ENCODE measurements at regions of chr9 and their contacts with region 1.

Region 1: GRCh38 chr9:122810306-122810946 is 10.5 kb downstream of the OR1K1 start:
- DNase-seq: peak; percentile 59 to 89 (median 72)
- ATAC-seq: peak; percentile 92
- H3K4me3 ChIP-seq: no peak overlapping the region
- H3K4me3 Mint-ChIP-seq: no peak overlapping the region
- H3K27ac ChIP-seq: no peak overlapping the region
- H3K27ac Mint-ChIP-seq: no peak overlapping the region
- H3K4me1 ChIP-seq: peaks cover 17% of the 10 kb centered on the region
- H3K4me1 Mint-ChIP-seq: peaks cover 30% of the 10 kb centered on the region
- H3K27me3 ChIP-seq: no peaks in the 10 kb centered on the region
- H3K27me3 Mint-ChIP-seq: no peaks in the 10 kb centered on the region
- CTCF ChIP-seq: peak; percentile 85

Region 2: DNA sequence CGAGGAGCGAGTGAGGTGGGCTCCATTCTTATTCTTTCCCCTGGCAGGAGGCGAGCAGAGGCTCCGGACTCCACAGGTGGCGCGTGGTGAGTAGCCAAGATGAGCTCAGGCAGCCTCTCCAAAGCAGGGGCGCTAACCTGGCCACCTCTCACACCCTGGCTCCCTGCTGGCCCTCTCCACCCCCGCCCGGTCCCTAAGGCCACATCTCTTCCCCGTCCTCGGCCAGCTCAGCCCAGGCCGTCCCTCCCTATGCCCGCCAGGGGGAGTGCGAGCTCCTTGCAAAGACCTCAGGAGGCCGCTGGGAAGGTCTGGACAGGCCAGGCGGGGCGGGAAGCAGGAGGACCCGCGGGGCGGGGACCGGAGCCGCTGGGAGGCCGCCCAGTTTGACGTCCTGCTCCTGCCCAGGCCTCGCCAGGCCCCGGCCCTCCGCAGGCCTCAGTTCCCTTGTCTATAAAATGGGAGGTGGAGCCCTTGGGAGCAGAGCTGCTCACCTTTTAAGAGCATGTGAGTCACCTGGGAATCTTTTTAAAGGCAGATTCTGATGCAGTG is 1264.5 kb before region 1 on chr9:
- CTCF ChIA-PET with region 1: no interaction called
- POLR2A ChIA-PET with region 1: no interaction called
- intact Hi-C with region 1: loop called in 1 of 2 experiments (anchors 5 kb)
- DNase-seq: peak; percentile 27 to 78 (median 46)
- ATAC-seq: peak; percentile 49
- H3K4me3 ChIP-seq: no peak overlapping the region
- H3K4me3 Mint-ChIP-seq: no peak overlapping the region
- H3K27ac ChIP-seq: no peak overlapping the region
- H3K27ac Mint-ChIP-seq: no peak overlapping the region
- H3K4me1 ChIP-seq: peaks cover 16% of the 10 kb centered on the region
- H3K4me1 Mint-ChIP-seq: peaks cover 2% of the 10 kb centered on the region
- H3K27me3 ChIP-seq: peaks cover 11 to 28% of the 10 kb centered on the region in 2 experiments
- H3K27me3 Mint-ChIP-seq: peaks cover 41% of the 10 kb centered on the region
- CTCF ChIP-seq: peak; percentile 72

Region 3: DNA sequence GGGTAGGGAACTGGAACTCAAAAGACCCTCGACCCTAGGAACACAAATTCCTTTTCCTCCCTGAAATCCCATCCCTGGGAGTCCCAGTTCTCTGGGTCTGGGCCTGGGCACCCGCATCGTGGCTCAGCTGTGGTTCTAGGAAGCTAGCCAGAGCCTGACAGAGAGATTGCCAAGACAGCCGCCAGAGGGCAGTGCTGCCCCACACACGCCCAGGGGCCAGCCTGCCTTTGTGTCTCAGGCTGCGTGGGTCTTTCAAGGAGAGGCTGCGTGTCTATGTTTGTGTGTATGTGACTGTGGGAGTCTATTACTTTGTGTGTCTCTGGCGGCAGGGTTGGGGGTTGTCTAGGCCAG is 685.3 kb before region 1 on chr9:
- CTCF ChIA-PET with region 1: interaction called, 6 read pairs
- POLR2A ChIA-PET with region 1: no interaction called
- intact Hi-C with region 1: loop called (anchors 1 kb)
- DNase-seq: peak; percentile 55 to 86 (median 74)
- ATAC-seq: peak; percentile 79
- H3K4me3 ChIP-seq: no peak overlapping the region
- H3K4me3 Mint-ChIP-seq: peak overlapping the region; percentile 65
- H3K27ac ChIP-seq: no peak overlapping the region
- H3K27ac Mint-ChIP-seq: no peak overlapping the region
- H3K4me1 ChIP-seq: peaks cover 36% of the 10 kb centered on the region
- H3K4me1 Mint-ChIP-seq: peaks cover 21% of the 10 kb centered on the region
- H3K27me3 ChIP-seq: peaks cover 18 to 27% of the 10 kb centered on the region in 2 experiments
- H3K27me3 Mint-ChIP-seq: peaks cover 52% of the 10 kb centered on the region
- CTCF ChIP-seq: peak; percentile 91

Region 4: DNA sequence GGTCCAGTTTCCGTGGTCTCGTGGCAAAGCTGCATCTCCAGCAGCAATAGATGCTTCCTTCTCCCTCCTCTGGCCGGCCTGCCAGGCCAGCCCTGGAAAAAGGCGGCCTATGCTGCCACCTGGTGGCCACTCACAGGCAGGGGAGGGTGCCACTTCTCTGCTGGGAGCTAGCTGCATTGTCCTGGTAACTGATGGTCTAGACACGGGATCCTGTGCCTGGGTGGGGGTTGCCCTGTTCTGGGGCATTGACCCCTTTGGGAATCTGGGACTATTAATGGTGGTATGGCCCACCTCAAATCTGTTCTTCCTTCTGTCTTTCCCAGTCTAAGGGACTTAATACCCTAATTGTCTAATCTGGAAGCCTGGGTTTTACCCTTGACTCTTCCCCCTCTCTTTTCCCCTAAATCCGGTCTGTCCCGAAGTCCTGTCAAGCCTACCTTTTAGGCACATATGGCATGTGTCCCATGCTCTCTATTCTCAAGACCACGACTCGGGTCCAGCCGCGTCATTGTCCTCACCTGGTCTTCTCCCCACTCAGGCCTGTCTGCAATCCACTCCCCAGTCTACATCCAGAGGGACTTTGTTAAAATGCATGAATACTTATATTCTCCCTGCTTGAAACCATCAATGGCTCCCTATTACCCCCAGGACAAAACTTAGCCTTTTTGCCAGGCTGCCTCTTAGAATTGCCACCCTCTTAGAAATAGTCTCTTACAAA is 459.6 kb before region 1 on chr9:
- CTCF ChIA-PET with region 1: no interaction called
- POLR2A ChIA-PET with region 1: no interaction called
- intact Hi-C with region 1: loop called (anchors 1 to 2 kb)
- DNase-seq: peak; percentile 48 to 82 (median 70)
- ATAC-seq: peak; percentile 79
- H3K4me3 ChIP-seq: no peak overlapping the region
- H3K4me3 Mint-ChIP-seq: no peak overlapping the region
- H3K27ac ChIP-seq: no peak overlapping the region
- H3K27ac Mint-ChIP-seq: no peak overlapping the region
- H3K4me1 ChIP-seq: peaks cover 6% of the 10 kb centered on the region
- H3K4me1 Mint-ChIP-seq: peaks cover 12% of the 10 kb centered on the region
- H3K27me3 ChIP-seq: peaks cover 15% of the 10 kb centered on the region in 2 experiments
- H3K27me3 Mint-ChIP-seq: peaks cover 54% of the 10 kb centered on the region
- CTCF ChIP-seq: peak; percentile 92

Region 5: DNA sequence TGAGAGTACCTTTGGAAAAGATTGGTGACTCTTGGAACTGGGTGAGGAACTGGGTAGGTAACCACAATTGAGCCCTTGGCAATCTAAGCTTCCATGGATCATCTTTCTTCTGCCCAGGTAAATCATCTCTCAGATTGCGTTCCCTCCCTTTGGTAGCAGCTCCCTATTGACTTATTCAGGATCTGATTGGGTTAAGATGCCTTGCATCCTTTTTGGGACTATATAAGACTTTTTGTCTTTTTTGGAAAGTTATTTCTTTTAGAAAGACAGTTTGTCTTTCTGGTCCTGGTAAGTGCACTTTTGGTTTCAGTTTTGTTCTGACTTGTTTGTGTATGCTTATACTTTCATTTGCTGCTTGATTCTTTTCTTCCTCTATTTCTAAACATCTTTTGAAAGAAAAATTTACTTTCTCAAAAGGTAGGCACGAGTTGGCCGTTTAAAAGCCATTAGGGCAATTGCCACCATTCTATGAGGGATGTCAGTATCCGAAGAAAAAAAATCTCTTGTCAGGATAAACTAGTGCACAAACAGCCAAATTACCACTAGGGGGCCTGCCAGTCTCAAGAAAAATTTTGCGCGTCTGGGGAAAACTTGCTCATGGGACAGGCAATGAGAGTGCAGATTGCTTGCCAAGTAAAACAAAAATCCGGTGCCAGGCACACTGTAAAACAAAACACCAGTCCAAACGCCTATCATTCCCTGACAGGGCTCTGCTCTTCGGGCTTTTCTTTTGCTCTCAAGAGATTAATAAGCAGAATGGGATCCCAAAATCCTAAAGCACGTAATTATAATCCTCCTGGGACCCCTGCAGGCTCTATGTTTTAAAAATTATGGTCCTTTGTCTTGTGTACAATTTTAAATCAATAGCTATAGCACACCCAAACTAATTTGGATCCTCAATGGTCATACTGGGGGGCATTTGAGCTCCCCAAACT is 345.5 kb before region 1 on chr9:
- CTCF ChIA-PET with region 1: interaction called, 3 read pairs
- POLR2A ChIA-PET with region 1: interaction called, 3 read pairs
- intact Hi-C with region 1: loop called (anchors 1 kb)
- DNase-seq: peak; percentile 41 to 79 (median 52)
- ATAC-seq: peak; percentile 77
- H3K4me3 ChIP-seq: peak overlapping the region; percentile 56
- H3K4me3 Mint-ChIP-seq: peak overlapping the region; percentile 92
- H3K27ac ChIP-seq: peak overlapping the region in 1 of 2 donors; percentile 42
- H3K27ac Mint-ChIP-seq: peak overlapping the region; percentile 78
- H3K4me1 ChIP-seq: peaks cover 7% of the 10 kb centered on the region
- H3K4me1 Mint-ChIP-seq: peaks cover 17% of the 10 kb centered on the region
- H3K27me3 ChIP-seq: peaks cover 6 to 7% of the 10 kb centered on the region in 2 experiments
- H3K27me3 Mint-ChIP-seq: peaks cover 53% of the 10 kb centered on the region
- CTCF ChIP-seq: peak; percentile 87

Measured in CD4-positive, alpha-beta T cell (primary cell).